ENCODE measurements at regions of chr9 and their contacts with region 1.

Region 1: DNA sequence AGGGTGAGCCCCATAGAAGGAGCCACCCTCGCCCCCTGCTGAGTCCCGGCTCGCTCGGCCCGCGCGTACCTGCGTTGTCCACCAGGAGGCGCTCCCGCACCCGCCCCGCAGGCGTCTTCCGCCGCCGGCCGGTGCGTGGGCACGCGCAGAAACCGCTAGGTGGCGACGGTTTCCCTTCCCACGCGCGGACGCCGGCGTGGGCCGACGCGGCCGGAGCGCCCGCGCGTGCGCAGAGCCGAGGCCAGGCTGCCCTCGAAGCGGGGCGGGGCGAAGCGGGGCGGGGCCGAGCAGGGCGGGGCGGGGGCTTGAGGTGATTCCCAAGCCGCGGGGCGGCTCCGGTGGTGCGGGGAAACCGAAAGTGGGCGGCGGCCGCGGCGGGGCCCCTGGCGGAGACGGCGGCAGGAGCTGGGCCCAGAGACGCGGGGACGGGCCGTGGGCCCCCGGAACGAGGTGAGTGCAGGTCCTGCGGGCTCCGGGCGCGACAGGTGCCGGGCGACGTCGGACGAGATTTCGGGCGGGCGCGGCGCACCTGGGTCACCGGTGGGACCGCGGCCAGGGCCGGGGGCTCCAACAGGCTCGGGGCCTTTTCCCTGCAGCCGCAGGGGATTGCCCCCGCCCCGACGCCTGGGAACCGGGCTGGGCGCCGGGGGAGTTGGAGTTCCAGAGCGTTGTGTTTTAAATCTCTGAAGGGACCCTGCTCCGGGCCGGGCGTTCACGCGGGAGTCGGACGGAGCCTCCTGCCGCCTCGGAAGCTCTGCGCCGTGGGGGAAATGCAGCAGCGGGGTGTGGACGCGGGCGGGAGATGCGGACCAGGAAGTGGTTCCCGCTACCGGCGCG is at the start of gene TDRD7:
- DNase-seq: peak; percentile 44
- H3K4me3 ChIP-seq: peak within 1 kb of the TSS; percentile 84 to 100 (median 92)
- H3K27ac ChIP-seq: peak within 1 kb of the TSS; percentile 86 to 94 (median 90)
- H3K4me1 ChIP-seq: peaks cover 3 to 31% (median 7%) of the 10 kb centered on the region in 3 donors
- H3K27me3 ChIP-seq: peaks cover 0 to 24% (median 0%) of the 10 kb centered on the region in 4 donors
- CTCF ChIP-seq: peak; percentile 96 to 100 (median 99)
- POLR2A ChIP-seq: peak in 2 of 4 donors; percentile 43 to 47
- total RNA-seq, gene TDRD7: 7.7 to 11.3 (median 10.2) TPM

Region 2: GRCh38 chr9:97615439-97616072 is 203.5 kb after region 1 on chr9:
- intact Hi-C with region 1: loop called (anchors 10 kb)
- DNase-seq: no peak
- H3K4me3 ChIP-seq: no peak overlapping the region
- H3K27ac ChIP-seq: peak overlapping the region in 1 of 4 donors; percentile 2
- H3K4me1 ChIP-seq: peaks cover 0 to 7% (median 0%) of the 10 kb centered on the region in 3 donors
- H3K27me3 ChIP-seq: no peaks in the 10 kb centered on the region
- CTCF ChIP-seq: peak; percentile 65 to 84 (median 80)
- POLR2A ChIP-seq: no peak